Activated CD4-positive, alpha-beta T cell treated with anti-CD3 and anti-CD28 coated beads for 36 hours (primary cell): ENCODE measurements at regions of chr1 and their contacts with region 1.

Region 1: GRCh38 chr1:179809506-179810366 is 66.6 kb downstream of the FAM163A start:
- DNase-seq: peak; percentile 80
- ATAC-seq: peak; percentile 65
- H3K4me3 Mint-ChIP-seq: no peak overlapping the region
- H3K27ac Mint-ChIP-seq: no peak overlapping the region
- H3K4me1 Mint-ChIP-seq: peaks cover 11% of the 10 kb centered on the region
- H3K27me3 Mint-ChIP-seq: peaks cover 2% of the 10 kb centered on the region

Region 2: DNA sequence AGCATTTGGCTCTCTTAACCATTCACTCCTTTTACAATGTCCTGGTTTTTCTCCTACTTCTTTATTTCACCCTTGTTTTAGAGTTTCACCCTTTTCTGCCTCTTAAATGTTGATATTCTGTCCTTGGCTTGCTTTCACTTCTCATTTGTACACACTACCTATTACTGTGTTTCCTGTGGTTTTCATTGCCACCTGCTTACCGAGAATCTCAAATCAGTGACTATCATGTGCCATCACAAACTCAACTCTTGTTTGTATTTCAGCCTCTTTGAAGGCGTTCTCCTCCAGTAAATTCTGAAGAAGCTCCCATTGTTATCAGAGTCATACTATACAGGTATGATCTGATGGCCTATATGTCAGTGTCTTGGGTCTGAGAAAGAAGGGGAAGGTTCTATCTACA is 299.7 kb before region 1 on chr1:
- CTCF ChIA-PET with region 1: no interaction called
- POLR2A ChIA-PET with region 1: no interaction called
- intact Hi-C with region 1: no loop called
- DNase-seq: no peak
- ATAC-seq: peak; percentile 30
- H3K4me3 Mint-ChIP-seq: no peak overlapping the region
- H3K27ac Mint-ChIP-seq: no peak overlapping the region
- H3K4me1 Mint-ChIP-seq: no peaks in the 10 kb centered on the region
- H3K27me3 Mint-ChIP-seq: peaks cover 7% of the 10 kb centered on the region

Region 3: DNA sequence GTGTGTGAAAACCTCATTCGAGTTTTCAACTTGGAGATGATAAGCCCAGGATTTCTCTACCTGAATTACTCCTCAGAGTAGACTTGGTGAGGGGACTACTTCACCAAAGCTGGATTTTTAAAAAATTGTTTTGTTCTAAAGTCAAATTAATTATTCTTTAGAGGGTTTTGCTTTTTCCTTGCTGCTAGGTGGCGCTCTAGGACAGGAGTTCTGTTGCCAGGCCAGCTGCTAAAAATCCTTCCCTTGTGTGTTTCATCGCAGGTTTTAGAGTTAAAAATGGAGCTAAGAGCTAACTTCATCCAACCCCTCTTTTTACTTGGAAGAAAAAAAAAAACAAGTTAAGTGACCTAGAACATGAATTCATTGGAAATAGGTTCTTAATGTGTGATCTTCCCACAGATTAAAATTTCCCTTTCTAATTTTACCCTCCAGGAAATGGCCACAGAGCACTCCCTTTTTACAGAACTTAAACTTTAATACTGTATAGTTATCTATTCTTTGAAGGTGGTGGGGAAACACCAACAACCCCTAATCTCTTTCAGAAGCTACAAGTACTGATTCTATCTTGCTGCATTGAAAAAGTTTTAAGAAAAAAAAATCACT is 103.3 kb before region 1 on chr1:
- CTCF ChIA-PET with region 1: interaction called, 619 read pairs
- POLR2A ChIA-PET with region 1: interaction called, 6 read pairs
- intact Hi-C with region 1: loop called (anchors 1 kb)
- DNase-seq: peak; percentile 79
- ATAC-seq: peak; percentile 55
- H3K4me3 Mint-ChIP-seq: no peak overlapping the region
- H3K27ac Mint-ChIP-seq: peak overlapping the region; percentile 38
- H3K4me1 Mint-ChIP-seq: peaks cover 17% of the 10 kb centered on the region
- H3K27me3 Mint-ChIP-seq: no peaks in the 10 kb centered on the region

Region 4: DNA sequence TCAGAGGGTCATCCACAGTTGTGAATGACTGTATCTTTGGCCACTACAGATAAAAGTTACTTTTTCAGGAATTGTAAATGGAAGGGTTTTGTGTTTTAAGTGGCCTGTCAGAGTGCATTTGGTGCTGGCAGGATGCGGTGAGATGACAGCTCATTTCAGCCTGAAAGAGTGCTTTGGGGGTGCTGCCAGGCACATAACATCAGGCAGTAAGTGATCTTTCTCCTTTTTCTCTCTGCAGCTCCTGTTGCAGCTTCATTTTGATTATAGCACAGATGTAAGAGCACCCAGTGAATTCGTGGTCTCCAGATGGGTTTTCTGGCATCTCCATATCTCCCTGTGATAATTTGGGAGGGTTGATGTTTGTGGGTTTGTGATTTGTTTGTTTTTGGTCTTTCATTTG is 81.5 kb before region 1 on chr1:
- CTCF ChIA-PET with region 1: interaction called, 17 read pairs
- POLR2A ChIA-PET with region 1: no interaction called
- intact Hi-C with region 1: no loop called
- DNase-seq: no peak
- ATAC-seq: no peak
- H3K4me3 Mint-ChIP-seq: no peak overlapping the region
- H3K27ac Mint-ChIP-seq: no peak overlapping the region
- H3K4me1 Mint-ChIP-seq: no peaks in the 10 kb centered on the region
- H3K27me3 Mint-ChIP-seq: peaks cover 10% of the 10 kb centered on the region

Region 5: DNA sequence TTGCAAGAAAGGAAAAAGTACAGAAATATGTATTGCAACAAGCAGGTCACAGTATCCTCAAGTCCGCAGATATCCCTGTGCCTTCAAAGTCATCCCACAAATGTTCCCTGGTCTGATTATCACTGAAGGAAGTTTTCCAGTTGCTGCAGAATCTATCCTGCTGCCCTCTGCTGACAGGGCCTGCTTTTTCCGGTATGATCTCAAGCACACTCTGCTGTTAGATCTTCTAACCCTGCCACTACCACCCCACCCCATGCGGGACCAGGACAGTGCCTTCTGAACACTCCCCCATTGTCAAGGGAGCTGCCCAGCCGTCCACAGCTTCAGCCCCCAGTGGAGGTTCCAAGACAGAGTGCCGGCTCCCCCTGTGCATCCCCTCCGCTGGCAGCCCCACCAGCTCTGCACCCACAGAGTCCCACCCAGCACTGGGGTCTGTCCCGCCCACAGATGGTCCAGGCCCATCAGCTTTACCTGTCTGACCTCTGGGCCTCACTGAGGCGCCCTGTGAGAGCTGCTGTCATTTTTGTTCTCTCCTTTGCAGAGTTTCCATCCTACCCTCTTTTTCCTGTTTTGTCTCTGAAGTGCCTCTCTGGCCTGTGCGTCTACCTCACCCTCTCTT is 38.7 kb before region 1 on chr1:
- CTCF ChIA-PET with region 1: interaction called, 11 read pairs
- POLR2A ChIA-PET with region 1: no interaction called
- intact Hi-C with region 1: no loop called
- DNase-seq: no peak
- ATAC-seq: no peak
- H3K4me3 Mint-ChIP-seq: no peak overlapping the region
- H3K27ac Mint-ChIP-seq: no peak overlapping the region
- H3K4me1 Mint-ChIP-seq: no peaks in the 10 kb centered on the region
- H3K27me3 Mint-ChIP-seq: no peaks in the 10 kb centered on the region

Region 6: GRCh38 chr1:179794669-179795068 is 15.1 kb before region 1 on chr1:
- CTCF ChIA-PET with region 1: interaction called, 20 read pairs
- POLR2A ChIA-PET with region 1: no interaction called
- intact Hi-C with region 1: no loop called
- DNase-seq: no peak
- ATAC-seq: no peak
- H3K4me3 Mint-ChIP-seq: no peak overlapping the region
- H3K27ac Mint-ChIP-seq: no peak overlapping the region
- H3K4me1 Mint-ChIP-seq: no peaks in the 10 kb centered on the region
- H3K27me3 Mint-ChIP-seq: no peaks in the 10 kb centered on the region

Region 7: DNA sequence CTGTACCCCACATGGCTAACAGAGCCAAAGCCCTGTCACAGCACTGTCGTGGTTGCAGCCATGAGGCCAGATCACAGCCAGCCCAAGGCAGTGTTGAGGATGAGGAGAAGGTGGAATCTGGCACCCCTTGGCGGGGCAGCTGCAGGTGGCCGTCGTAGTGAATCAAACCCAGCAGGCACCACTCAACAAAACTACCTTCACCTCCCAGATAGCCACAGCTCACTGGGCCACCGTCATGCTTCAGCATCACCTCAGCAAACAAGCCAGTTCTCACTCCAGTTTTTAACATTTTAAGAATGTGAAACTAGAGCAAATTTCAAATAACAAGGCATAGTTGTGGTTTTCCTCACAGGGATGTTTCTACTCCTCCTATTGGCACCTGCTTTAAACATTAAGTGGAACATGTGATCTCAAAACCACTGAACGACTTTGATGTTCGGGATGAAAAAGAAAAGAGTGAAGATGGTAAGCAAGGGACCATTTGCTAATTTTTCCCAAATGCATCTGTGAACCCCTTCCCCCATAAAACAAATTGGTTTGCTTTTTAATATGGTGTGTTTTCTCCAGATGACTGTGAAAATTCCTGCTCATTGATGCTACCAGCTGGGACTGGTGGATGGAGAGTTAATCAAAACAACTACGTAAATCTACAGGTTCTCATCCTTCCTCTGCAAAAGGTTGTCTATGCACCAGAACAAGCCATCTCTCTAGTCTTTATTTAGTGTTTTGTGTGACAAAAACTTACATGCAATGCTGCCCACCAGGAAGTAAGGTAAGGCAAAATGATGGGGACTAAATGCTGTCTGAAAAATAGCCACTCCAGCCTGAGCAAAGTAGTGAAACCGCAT is 22.3 kb after region 1 on chr1:
- CTCF ChIA-PET with region 1: interaction called, 15 read pairs
- POLR2A ChIA-PET with region 1: no interaction called
- intact Hi-C with region 1: no loop called
- DNase-seq: peak; percentile 42
- ATAC-seq: peak; percentile 78
- H3K4me3 Mint-ChIP-seq: no peak overlapping the region
- H3K27ac Mint-ChIP-seq: peak overlapping the region; percentile 44
- H3K4me1 Mint-ChIP-seq: peaks cover 25% of the 10 kb centered on the region
- H3K27me3 Mint-ChIP-seq: no peaks in the 10 kb centered on the region

Region 8: GRCh38 chr1:179853102-179853501 is 43.4 kb after region 1 on chr1:
- CTCF ChIA-PET with region 1: interaction called, 10 read pairs
- POLR2A ChIA-PET with region 1: no interaction called
- intact Hi-C with region 1: no loop called
- DNase-seq: no peak
- ATAC-seq: no peak
- H3K4me3 Mint-ChIP-seq: no peak overlapping the region
- H3K27ac Mint-ChIP-seq: no peak overlapping the region
- H3K4me1 Mint-ChIP-seq: peaks cover 2% of the 10 kb centered on the region
- H3K27me3 Mint-ChIP-seq: no peaks in the 10 kb centered on the region

Region 9: DNA sequence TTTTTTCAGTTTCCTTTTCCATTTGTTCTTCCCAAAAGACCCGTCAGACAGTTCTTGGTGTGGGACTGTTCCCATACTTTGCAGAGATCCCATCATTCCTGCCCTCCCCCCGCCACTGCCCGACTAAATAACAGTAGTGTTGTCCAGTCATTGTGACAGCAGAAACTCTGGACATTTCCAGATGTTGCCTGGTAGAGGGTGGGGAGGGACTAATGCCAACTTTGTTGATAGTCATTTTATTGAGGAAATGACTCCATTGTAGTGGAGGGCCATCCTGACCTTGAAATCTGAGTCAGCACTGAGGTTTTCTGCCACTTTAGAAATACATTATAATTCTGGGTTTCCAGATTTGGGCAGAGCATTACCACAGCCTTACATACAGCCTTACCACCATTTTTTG is 230.3 kb after region 1 on chr1:
- CTCF ChIA-PET with region 1: no interaction called
- POLR2A ChIA-PET with region 1: no interaction called
- intact Hi-C with region 1: no loop called
- DNase-seq: no peak
- ATAC-seq: no peak
- H3K4me3 Mint-ChIP-seq: no peak overlapping the region
- H3K27ac Mint-ChIP-seq: no peak overlapping the region
- H3K4me1 Mint-ChIP-seq: no peaks in the 10 kb centered on the region
- H3K27me3 Mint-ChIP-seq: no peaks in the 10 kb centered on the region